Activated T-helper 2 cell treated with anti-CD3 and anti-CD28 coated beads, Interferon-gamma antibody, Interleukin-2, Interleukin-4, amounts not matched to agents 10 μg/mL and 5 μg/mL and 100 μg/mL, durations not matched to agents 14 hours and 24 hours and 36 hours (primary cell): ENCODE measurements at regions of chr18 and their contacts with region 1.

Region 1: GRCh38 chr18:11553098-11553940 is 56.1 kb upstream of the SLC35G4 start:
- DNase-seq: peak; percentile 13
- H3K4me3 Mint-ChIP-seq: no peak overlapping the region
- H3K27ac Mint-ChIP-seq: no peak overlapping the region
- H3K4me1 Mint-ChIP-seq: no peaks in the 10 kb centered on the region
- H3K27me3 Mint-ChIP-seq: peaks cover 4% of the 10 kb centered on the region

Region 2: GRCh38 chr18:11310476-11311086 is 242.7 kb before region 1 on chr18:
- intact Hi-C with region 1: loop called (anchors 10 kb)
- DNase-seq: no peak
- H3K4me3 Mint-ChIP-seq: no peak overlapping the region
- H3K27ac Mint-ChIP-seq: no peak overlapping the region
- H3K4me1 Mint-ChIP-seq: peaks cover 5% of the 10 kb centered on the region
- H3K27me3 Mint-ChIP-seq: no peaks in the 10 kb centered on the region

Region 3: DNA sequence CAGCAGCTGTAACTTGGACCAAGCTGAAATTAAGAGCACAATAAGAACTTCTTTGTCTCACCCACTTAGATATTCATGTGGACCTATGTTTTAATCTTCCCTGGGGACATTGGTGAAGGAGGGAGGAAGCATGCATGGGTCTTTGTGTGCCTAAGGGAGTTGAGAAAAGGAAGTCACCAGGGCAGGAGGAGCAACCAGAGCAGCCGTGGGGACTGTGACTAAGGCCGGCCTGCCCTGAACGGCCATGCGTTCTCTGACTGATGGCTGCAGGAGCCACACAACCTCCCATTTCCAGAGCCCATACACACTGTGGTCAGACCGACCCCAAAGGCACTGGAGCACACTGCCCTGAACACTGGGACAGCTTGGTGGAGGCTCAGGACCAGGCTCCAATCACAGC is 12.4 kb after region 1 on chr18:
- intact Hi-C with region 1: no loop called
- DNase-seq: no peak
- H3K4me3 Mint-ChIP-seq: no peak overlapping the region
- H3K27ac Mint-ChIP-seq: no peak overlapping the region
- H3K4me1 Mint-ChIP-seq: no peaks in the 10 kb centered on the region
- H3K27me3 Mint-ChIP-seq: peaks cover 5% of the 10 kb centered on the region